Naive thymus-derived CD4-positive, alpha-beta T cell (primary cell): ENCODE measurements at regions of chr5 and their contacts with region 1.

Region 1: DNA sequence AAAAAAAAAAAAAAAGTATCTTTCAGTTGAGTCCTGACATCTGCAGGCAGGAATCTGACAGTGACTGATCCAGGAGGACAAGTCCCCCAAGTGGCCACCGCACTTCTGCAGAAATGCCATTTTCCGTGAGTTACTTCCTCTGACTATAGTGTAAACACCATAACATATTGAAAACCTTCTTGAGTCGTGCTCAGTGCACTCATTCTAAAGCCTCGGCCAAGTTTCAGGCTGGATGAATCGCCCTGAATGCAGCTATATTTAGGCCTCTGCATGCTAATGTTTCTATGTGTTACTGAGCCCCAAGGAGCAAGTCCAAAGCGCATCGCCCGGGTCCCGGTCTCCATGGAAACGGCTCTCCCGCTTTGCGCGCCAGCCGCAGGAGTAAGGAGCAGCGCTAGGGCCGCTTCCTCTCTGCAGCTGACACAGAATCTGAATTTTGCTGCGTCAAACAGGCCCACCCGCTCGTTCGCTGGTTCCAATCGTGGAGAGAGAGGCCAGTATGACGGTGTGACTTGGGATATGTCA is 335.4 kb downstream of the MSX2 start:
- DNase-seq: peak in 1 of 9 donors; percentile 24
- ATAC-seq: no peak
- H3K4me3 ChIP-seq: peak overlapping the region; percentile 31
- H3K4me3 Mint-ChIP-seq: peak overlapping the region; percentile 60 to 90 (median 79)
- H3K27ac ChIP-seq: no peak overlapping the region
- H3K27ac Mint-ChIP-seq: peak overlapping the region in 5 of 9 donors; percentile 4 to 88 (median 50)
- H3K4me1 ChIP-seq: no peaks in the 10 kb centered on the region
- H3K4me1 Mint-ChIP-seq: peaks cover 0 to 20% (median 7%) of the 10 kb centered on the region in 7 donors
- H3K27me3 ChIP-seq: no peaks in the 10 kb centered on the region
- H3K27me3 Mint-ChIP-seq: peaks cover 4 to 29% (median 9%) of the 10 kb centered on the region in 5 donors

Region 2: DNA sequence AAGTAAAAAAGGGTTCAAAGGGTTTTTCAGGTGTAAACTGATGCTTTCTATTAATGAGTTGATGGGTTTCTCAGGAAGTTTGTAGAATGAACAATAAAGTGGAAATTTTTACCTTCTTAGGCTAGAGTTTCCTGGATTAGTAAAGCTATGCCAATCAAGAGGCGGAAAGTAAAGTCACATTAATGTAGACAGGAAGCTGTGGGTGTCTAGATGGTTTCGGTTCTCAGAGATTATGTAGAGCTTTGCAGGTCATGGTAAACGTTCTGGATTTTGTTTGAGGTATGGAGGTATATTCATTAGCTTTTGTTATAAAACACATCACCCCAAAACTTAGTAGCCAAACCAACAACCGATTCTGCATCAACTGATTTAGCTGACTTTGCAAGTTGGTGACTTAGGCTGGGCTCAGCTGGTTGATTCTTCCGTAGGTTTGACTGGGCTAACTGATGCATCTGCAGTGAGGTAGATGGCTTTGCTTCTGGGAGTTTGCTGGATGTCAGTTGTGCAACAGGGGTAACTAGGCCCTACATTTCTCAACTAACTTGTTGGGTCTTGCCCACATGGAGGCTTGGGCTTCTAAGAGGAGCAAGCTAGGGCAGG is 61.5 kb before region 1 on chr5:
- CTCF ChIA-PET with region 1: no interaction called
- POLR2A ChIA-PET with region 1: no interaction called
- intact Hi-C with region 1: loop called in 1 of 2 experiments (anchors 5 kb)
- DNase-seq: no peak
- ATAC-seq: no peak
- H3K4me3 ChIP-seq: no peak overlapping the region
- H3K4me3 Mint-ChIP-seq: peak overlapping the region in 4 of 10 donors; percentile 5 to 75 (median 34)
- H3K27ac ChIP-seq: no peak overlapping the region
- H3K27ac Mint-ChIP-seq: peak overlapping the region in 2 of 9 donors; percentile 49 to 79
- H3K4me1 ChIP-seq: no peaks in the 10 kb centered on the region
- H3K4me1 Mint-ChIP-seq: peaks cover 0 to 18% (median 15%) of the 10 kb centered on the region in 7 donors
- H3K27me3 ChIP-seq: no peaks in the 10 kb centered on the region
- H3K27me3 Mint-ChIP-seq: peaks cover 0 to 9% (median 5%) of the 10 kb centered on the region in 5 donors

Region 3: DNA sequence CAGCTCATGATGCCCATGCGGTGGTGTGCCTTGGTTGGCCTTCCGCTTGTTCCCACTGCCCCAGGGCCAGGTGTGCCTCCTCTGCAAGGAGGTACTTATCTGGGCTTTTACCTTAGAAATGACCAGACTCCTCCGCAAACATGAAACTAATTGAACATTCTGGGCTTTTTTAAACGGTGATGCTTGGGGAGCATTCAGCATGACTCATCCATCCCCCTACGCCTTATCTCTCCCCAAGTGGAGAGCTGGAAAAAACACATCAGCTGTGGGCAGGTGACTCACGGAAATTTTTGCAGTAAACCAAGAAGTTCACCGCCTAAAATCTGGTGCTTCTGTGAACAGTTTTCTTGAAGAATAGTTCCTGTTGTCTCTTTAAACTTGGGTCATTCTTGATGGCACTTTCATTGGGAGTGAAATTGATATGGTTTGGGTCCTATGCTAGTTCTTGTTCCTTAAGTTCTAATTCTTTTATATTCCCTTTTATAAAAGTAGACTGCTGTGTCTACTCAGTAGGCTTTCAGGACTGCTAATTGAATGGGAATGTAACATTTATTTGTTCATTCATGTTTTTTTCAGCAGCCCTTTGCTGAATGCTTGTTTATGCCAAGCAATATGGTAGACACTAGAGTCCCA is 458.2 kb after region 1 on chr5:
- CTCF ChIA-PET with region 1: no interaction called
- POLR2A ChIA-PET with region 1: no interaction called
- intact Hi-C with region 1: no loop called
- DNase-seq: peak in 2 of 9 donors; percentile 62 to 81
- ATAC-seq: no peak
- H3K4me3 ChIP-seq: no peak overlapping the region
- H3K4me3 Mint-ChIP-seq: peak overlapping the region; percentile 26 to 80 (median 54)
- H3K27ac ChIP-seq: peak overlapping the region; percentile 22
- H3K27ac Mint-ChIP-seq: peak overlapping the region; percentile 60 to 97 (median 93)
- H3K4me1 ChIP-seq: peaks cover 44 to 50% of the 10 kb centered on the region in 2 donors
- H3K4me1 Mint-ChIP-seq: peaks cover 47 to 87% (median 76%) of the 10 kb centered on the region in 7 donors
- H3K27me3 ChIP-seq: no peaks in the 10 kb centered on the region
- H3K27me3 Mint-ChIP-seq: no peaks in the 10 kb centered on the region